Naive thymus-derived CD4-positive, alpha-beta T cell (primary cell): ENCODE measurements at regions of chr10 and their contacts with region 1.

Region 1: GRCh38 chr10:102394079-102394800 is 1.3 kb upstream of the NFKB2 start:
- DNase-seq: peak; percentile 96 to 100 (median 99)
- ATAC-seq: peak; percentile 83
- H3K4me3 ChIP-seq: peak overlapping the region; percentile 78
- H3K4me3 Mint-ChIP-seq: peak overlapping the region; percentile 92 to 99 (median 96)
- H3K27ac ChIP-seq: peak overlapping the region; percentile 100
- H3K27ac Mint-ChIP-seq: peak overlapping the region; percentile 94 to 100 (median 100)
- H3K4me1 ChIP-seq: peaks cover 16 to 24% of the 10 kb centered on the region in 2 donors
- H3K4me1 Mint-ChIP-seq: peaks cover 20 to 45% (median 39%) of the 10 kb centered on the region in 7 donors
- H3K27me3 ChIP-seq: no peaks in the 10 kb centered on the region
- H3K27me3 Mint-ChIP-seq: peaks cover 0 to 4% (median 0%) of the 10 kb centered on the region in 5 donors

Region 2: DNA sequence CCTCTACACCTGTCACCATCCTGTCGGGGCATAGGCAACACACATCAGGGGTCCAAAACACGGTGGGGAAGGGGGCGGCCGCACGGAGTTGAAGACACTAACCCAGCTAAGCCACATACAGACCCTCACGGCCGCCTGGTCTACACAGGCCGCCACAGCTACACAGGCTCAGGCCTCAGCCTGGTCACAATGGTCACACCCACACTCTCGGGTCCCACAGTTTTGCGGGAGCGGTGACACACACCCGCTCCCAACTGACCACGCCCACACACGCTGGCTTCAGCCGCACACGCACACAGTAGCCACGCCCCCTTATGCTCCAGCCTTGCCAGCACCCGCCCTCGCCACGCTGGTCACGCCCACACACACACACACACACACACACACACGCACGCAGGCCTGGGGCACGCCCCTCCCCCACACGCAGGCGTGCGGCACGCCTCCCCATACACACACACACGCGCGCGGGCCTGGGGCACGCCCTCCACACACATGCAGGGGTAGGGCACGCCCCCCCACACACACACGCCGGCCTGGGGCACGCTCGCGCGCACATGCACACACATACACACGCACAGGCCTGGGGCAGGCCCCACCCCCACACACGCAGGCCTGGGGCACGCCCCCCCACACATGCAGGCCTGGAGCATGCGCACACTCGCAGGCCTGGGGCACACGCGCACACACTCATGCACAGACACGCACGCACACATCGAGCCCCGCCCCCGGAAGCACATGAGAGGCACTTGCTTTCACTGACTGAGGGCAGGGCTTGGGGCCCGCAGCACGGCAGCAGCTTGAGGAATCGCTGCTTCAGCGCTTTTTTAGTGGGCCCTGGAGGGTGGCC is 563.7 kb before region 1 on chr10:
- CTCF ChIA-PET with region 1: no interaction called
- POLR2A ChIA-PET with region 1: no interaction called
- intact Hi-C with region 1: loop called in 1 of 2 experiments (anchors 2 kb)
- DNase-seq: peak; percentile 89 to 98 (median 95)
- ATAC-seq: peak; percentile 90
- H3K4me3 ChIP-seq: peak overlapping the region; percentile 66
- H3K4me3 Mint-ChIP-seq: peak overlapping the region; percentile 79 to 94 (median 88)
- H3K27ac ChIP-seq: peak overlapping the region; percentile 85
- H3K27ac Mint-ChIP-seq: peak overlapping the region; percentile 94 to 100 (median 99)
- H3K4me1 ChIP-seq: peaks cover 22 to 53% of the 10 kb centered on the region in 2 donors
- H3K4me1 Mint-ChIP-seq: peaks cover 41 to 59% (median 53%) of the 10 kb centered on the region in 7 donors
- H3K27me3 ChIP-seq: no peaks in the 10 kb centered on the region
- H3K27me3 Mint-ChIP-seq: peaks cover 0 to 4% (median 0%) of the 10 kb centered on the region in 5 donors

Region 3: DNA sequence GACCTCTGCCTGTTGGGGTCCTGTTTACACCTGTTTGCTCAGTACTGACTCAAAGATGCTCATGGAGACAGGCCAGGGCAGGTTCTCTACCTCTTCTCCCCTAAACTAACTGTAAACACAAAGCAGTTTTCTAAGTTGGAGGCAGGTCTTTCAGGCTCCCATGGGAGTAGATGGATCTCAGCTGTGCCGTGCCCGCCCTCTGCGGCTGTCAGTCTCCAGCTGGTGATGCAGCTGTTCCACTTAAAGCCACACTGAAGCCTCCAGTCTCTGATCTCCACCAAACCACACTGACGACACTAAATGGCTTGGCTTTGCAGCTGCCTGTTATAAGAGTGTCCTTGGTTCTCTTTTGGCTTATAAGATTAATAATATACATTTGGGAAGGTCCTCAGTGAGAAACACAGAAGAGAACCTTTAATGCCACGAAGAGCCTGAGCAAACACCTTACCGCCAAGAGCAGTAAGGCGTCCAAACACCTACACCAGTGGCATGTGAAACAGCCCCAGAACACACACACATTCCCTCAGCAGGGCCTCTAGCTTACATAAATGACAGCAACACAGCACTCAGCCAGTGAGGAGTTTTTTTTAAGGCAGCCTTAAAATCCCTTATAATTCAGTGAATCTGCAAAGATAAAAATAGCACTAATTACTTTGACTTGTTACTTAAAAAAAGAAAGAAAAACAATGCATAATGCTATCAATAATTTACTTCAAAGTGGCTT is 490.3 kb before region 1 on chr10:
- CTCF ChIA-PET with region 1: no interaction called
- POLR2A ChIA-PET with region 1: no interaction called
- intact Hi-C with region 1: no loop called
- DNase-seq: no peak
- ATAC-seq: peak; percentile 49
- H3K4me3 ChIP-seq: no peak overlapping the region
- H3K4me3 Mint-ChIP-seq: no peak overlapping the region
- H3K27ac ChIP-seq: no peak overlapping the region
- H3K27ac Mint-ChIP-seq: no peak overlapping the region
- H3K4me1 ChIP-seq: no peaks in the 10 kb centered on the region
- H3K4me1 Mint-ChIP-seq: peaks cover 6 to 30% (median 8%) of the 10 kb centered on the region in 7 donors
- H3K27me3 ChIP-seq: no peaks in the 10 kb centered on the region
- H3K27me3 Mint-ChIP-seq: no peaks in the 10 kb centered on the region

Region 4: DNA sequence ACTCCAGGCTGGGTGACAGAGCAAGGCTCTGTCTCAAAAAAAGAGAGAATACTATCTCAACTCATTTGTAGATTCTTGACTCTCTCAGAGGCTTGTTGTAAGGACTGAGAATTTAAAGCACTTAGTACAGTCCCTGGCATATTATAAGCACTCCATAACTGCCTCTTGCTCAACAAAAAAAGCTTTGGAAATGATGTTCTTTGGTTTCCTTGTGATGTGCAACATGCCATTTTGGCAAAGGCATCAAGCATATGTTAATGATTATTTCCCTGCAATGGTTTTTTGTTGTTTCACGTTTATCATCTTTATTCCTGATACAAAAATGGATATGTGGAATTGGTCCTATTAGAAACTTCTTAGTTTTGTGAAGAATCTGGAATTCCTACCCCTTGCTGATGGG is 226.4 kb before region 1 on chr10:
- CTCF ChIA-PET with region 1: no interaction called
- POLR2A ChIA-PET with region 1: no interaction called
- intact Hi-C with region 1: loop called in 1 of 2 experiments (anchors 1 kb)
- DNase-seq: no peak
- ATAC-seq: no peak
- H3K4me3 ChIP-seq: no peak overlapping the region
- H3K4me3 Mint-ChIP-seq: peak overlapping the region in 1 of 10 donors; percentile 45
- H3K27ac ChIP-seq: no peak overlapping the region
- H3K27ac Mint-ChIP-seq: no peak overlapping the region
- H3K4me1 ChIP-seq: peaks cover 0 to 8% of the 10 kb centered on the region in 2 donors
- H3K4me1 Mint-ChIP-seq: peaks cover 0 to 20% (median 8%) of the 10 kb centered on the region in 7 donors
- H3K27me3 ChIP-seq: no peaks in the 10 kb centered on the region
- H3K27me3 Mint-ChIP-seq: peaks cover 0 to 5% (median 0%) of the 10 kb centered on the region in 5 donors

Region 5: GRCh38 chr10:102420810-102421644 is 26.8 kb after region 1 on chr10 and contains the start of gene FBXL15:
- CTCF ChIA-PET with region 1: interaction called, 40 read pairs
- POLR2A ChIA-PET with region 1: interaction called, 90 read pairs
- intact Hi-C with region 1: loop called (anchors 1 kb)
- DNase-seq: peak; percentile 82 to 96 (median 90)
- ATAC-seq: peak; percentile 86
- H3K4me3 ChIP-seq: peak within 1 kb of the TSS; percentile 93
- H3K4me3 Mint-ChIP-seq: peak within 1 kb of the TSS; percentile 94 to 99 (median 98)
- H3K27ac ChIP-seq: peak within 1 kb of the TSS; percentile 75
- H3K27ac Mint-ChIP-seq: peak within 1 kb of the TSS; percentile 91 to 97 (median 95)
- H3K4me1 ChIP-seq: peaks cover 26 to 33% of the 10 kb centered on the region in 2 donors
- H3K4me1 Mint-ChIP-seq: peaks cover 17 to 46% (median 38%) of the 10 kb centered on the region in 7 donors
- H3K27me3 ChIP-seq: no peaks in the 10 kb centered on the region
- H3K27me3 Mint-ChIP-seq: peaks cover 17 to 26% (median 19%) of the 10 kb centered on the region in 5 donors
- total RNA-seq, gene FBXL15: 10.8 to 21.0 (median 14.1) TPM

Region 6: DNA sequence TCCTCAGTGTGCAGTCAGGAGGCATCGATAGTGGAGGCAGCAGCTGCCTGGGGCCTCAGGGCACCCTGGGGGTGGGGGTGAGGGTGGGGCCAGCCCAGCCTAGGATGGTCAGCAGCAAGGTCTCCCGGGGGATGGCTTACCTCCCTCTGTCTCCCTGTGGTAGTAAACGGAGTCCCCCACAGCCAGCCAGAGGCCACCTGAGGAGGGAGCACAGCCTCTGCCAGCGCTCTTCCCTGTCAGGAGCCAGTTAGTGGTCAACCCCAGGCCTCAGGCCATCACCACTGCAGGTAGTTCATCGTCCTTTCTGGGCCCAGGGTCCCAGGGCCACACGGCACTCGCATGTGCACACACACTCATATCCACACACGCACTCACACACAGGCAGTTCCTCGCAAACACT is 86.2 kb after region 1 on chr10:
- CTCF ChIA-PET with region 1: interaction called, 23 read pairs
- POLR2A ChIA-PET with region 1: interaction called, 5 read pairs
- intact Hi-C with region 1: loop called (anchors 1 kb)
- DNase-seq: no peak
- ATAC-seq: no peak
- H3K4me3 ChIP-seq: no peak overlapping the region
- H3K4me3 Mint-ChIP-seq: no peak overlapping the region
- H3K27ac ChIP-seq: no peak overlapping the region
- H3K27ac Mint-ChIP-seq: no peak overlapping the region
- H3K4me1 ChIP-seq: peaks cover 0 to 4% of the 10 kb centered on the region in 2 donors
- H3K4me1 Mint-ChIP-seq: peaks cover 5 to 26% (median 15%) of the 10 kb centered on the region in 7 donors
- H3K27me3 ChIP-seq: no peaks in the 10 kb centered on the region
- H3K27me3 Mint-ChIP-seq: no peaks in the 10 kb centered on the region

Region 7: GRCh38 chr10:102743588-102744373 is 349.5 kb after region 1 on chr10 and contains the start of gene WBP1L:
- CTCF ChIA-PET with region 1: no interaction called
- POLR2A ChIA-PET with region 1: no interaction called
- intact Hi-C with region 1: loop called in 1 of 2 experiments (anchors 1 kb)
- DNase-seq: peak; percentile 77 to 98 (median 96)
- ATAC-seq: peak; percentile 98
- H3K4me3 ChIP-seq: peak within 1 kb of the TSS; percentile 85
- H3K4me3 Mint-ChIP-seq: peak within 1 kb of the TSS; percentile 80 to 97 (median 93)
- H3K27ac ChIP-seq: peak within 1 kb of the TSS; percentile 77
- H3K27ac Mint-ChIP-seq: peak within 1 kb of the TSS; percentile 57 to 96 (median 90)
- H3K4me1 ChIP-seq: peaks cover 17 to 25% of the 10 kb centered on the region in 2 donors
- H3K4me1 Mint-ChIP-seq: peaks cover 33 to 59% (median 48%) of the 10 kb centered on the region in 7 donors
- H3K27me3 ChIP-seq: no peaks in the 10 kb centered on the region
- H3K27me3 Mint-ChIP-seq: no peaks in the 10 kb centered on the region
- total RNA-seq, gene WBP1L: 20.5 to 37.9 (median 34.1) TPM